ENCODE measurements at regions of chr12 and their contacts with region 1.

Region 1: GRCh38 chr12:69290545-69291277 is 51.3 kb downstream of the CPSF6 start:
- DNase-seq: peak; percentile 73 to 91
- H3K4me3 ChIP-seq: no peak overlapping the region
- H3K27ac ChIP-seq: no peak overlapping the region
- H3K4me1 ChIP-seq: no peaks in the 10 kb centered on the region; a peak in 1 of 7 replicates
- H3K27me3 ChIP-seq: no peaks in the 10 kb centered on the region
- CTCF ChIP-seq: peak; percentile 89 to 100 (median 98)
- EP300 ChIP-seq: no peak
- POLR2A ChIP-seq: no peak
- RAD21 ChIP-seq: peak; percentile 99

Region 2: GRCh38 chr12:69321351-69321750 is 30.6 kb after region 1 on chr12:
- CTCF ChIA-PET with region 1: interaction called, 11 read pairs
- POLR2A ChIA-PET with region 1: no interaction called
- DNase-seq: no peak
- H3K4me3 ChIP-seq: no peak overlapping the region
- H3K27ac ChIP-seq: no peak overlapping the region
- H3K4me1 ChIP-seq: peaks cover 0 to 4% (median 0%) of the 10 kb centered on the region in 4 experiments; a peak in 2 of 7 replicates
- H3K27me3 ChIP-seq: no peaks in the 10 kb centered on the region
- CTCF ChIP-seq: no peak
- EP300 ChIP-seq: no peak
- POLR2A ChIP-seq: no peak
- RAD21 ChIP-seq: no peak

Region 3: DNA sequence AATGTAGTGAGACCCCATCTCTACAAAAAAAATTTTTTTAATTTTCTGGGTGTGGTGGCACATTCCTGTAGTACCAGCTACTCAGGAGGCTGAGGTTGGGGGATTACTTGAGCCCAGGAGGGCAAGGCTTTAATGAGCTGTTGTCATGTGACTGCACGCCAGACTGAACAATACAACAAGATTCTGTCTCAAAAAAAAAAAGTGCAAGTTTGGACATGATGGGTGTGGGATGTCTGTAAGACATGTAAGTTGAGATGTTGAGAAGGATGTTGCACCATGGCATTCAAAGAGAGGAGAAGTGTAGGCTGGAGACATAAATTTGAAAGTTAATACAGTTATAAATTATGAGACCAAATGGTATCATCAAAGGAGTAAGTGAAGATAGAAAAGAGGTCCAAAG is 92.4 kb after region 1 on chr12:
- CTCF ChIA-PET with region 1: no interaction called
- POLR2A ChIA-PET with region 1: no interaction called
- DNase-seq: no peak
- H3K4me3 ChIP-seq: no peak overlapping the region
- H3K27ac ChIP-seq: no peak overlapping the region
- H3K4me1 ChIP-seq: no peaks in the 10 kb centered on the region
- H3K27me3 ChIP-seq: no peaks in the 10 kb centered on the region
- CTCF ChIP-seq: no peak
- EP300 ChIP-seq: no peak
- POLR2A ChIP-seq: no peak
- RAD21 ChIP-seq: no peak

Measured in H1 (cell line).